AG04450 (cell line): ENCODE measurements at regions of chr10 and their contacts with region 1.

Region 1: GRCh38 chr10:117320050-117320665 is 55.1 kb downstream of the PDZD8 start:
- DNase-seq: no peak
- H3K4me3 ChIP-seq: no peak overlapping the region
- H3K27ac ChIP-seq: no peak overlapping the region
- H3K27me3 ChIP-seq: no peaks in the 10 kb centered on the region
- CTCF ChIP-seq: peak; percentile 67

Region 2: DNA sequence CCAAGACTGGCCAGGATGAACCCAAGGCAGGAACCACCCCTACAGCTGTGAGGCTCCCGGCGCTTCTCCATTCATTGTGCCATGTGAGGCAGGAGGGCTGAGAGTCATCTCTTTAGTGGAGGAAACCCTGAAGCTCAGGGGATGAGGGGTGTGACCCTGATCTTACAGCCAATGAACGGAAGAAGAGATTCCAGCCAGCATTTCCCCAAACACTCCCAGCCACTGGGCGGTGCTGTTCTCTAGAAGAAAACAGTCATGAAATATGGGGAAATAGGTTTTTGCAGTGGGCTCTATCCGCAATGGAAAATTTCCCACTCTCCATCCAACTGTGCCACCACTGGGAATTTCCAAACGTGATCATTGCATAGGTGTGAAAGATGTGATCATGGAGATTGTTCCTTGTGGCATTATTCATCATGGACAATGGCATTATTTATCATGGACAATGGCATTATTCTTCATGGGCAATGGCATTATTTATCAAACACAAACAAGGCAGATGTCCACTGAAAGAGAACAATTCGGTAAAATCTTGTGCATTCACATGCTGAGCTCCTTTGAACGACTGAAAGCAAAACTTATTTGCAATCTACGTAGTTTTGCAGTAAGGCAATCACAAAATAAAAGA is 93.2 kb before region 1 on chr10:
- CTCF ChIA-PET with region 1: interaction called, 19 read pairs
- POLR2A ChIA-PET with region 1: no interaction called
- DNase-seq: no peak
- H3K4me3 ChIP-seq: no peak overlapping the region
- H3K27ac ChIP-seq: no peak overlapping the region
- H3K27me3 ChIP-seq: no peaks in the 10 kb centered on the region
- CTCF ChIP-seq: peak; percentile 49

Region 3: DNA sequence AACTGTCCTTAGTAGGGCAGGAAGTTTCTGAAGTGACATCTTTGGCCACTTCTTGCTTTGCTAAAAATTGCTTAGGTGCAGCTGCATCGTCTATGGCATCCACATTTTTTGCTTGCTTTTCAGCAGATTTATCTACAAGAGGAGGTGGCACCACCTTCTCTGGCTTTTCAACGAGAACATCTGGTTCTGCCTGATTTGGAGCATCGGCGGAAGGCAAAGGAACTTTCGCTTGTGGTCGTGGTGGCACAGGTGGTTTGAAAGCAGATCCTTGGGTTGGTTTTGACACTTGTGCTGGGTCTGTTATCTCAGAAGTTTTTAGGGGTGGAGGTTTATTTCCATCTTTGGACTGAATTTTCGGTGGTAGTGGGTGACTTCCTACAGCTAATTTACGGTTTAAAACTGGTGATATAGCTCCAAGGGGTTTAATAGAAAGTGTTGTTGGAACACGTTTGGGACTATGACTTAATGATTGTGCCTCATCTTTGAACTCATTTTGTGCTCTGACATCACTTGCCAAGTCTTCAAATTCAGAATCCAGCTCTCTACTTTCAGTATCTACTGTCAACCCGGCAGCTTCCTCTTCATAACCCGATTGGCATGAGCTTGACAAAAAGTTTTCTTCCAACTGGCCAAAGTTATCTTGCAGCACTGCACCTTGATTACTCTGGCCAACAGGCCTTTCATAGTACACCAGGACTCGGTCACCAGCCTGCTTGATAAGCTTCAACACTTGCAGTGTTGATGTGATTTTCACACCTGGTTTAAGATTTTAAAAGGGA is 35.3 kb before region 1 on chr10:
- CTCF ChIA-PET with region 1: interaction called, 39 read pairs
- POLR2A ChIA-PET with region 1: no interaction called
- DNase-seq: no peak
- H3K4me3 ChIP-seq: no peak overlapping the region
- H3K27ac ChIP-seq: no peak overlapping the region
- H3K27me3 ChIP-seq: no peaks in the 10 kb centered on the region
- CTCF ChIP-seq: no peak

Region 4: GRCh38 chr10:117334066-117334465 is 13.9 kb after region 1 on chr10:
- CTCF ChIA-PET with region 1: interaction called, 38 read pairs
- POLR2A ChIA-PET with region 1: no interaction called
- DNase-seq: no peak
- H3K4me3 ChIP-seq: no peak overlapping the region
- H3K27ac ChIP-seq: no peak overlapping the region
- H3K27me3 ChIP-seq: no peaks in the 10 kb centered on the region
- CTCF ChIP-seq: no peak

Region 5: DNA sequence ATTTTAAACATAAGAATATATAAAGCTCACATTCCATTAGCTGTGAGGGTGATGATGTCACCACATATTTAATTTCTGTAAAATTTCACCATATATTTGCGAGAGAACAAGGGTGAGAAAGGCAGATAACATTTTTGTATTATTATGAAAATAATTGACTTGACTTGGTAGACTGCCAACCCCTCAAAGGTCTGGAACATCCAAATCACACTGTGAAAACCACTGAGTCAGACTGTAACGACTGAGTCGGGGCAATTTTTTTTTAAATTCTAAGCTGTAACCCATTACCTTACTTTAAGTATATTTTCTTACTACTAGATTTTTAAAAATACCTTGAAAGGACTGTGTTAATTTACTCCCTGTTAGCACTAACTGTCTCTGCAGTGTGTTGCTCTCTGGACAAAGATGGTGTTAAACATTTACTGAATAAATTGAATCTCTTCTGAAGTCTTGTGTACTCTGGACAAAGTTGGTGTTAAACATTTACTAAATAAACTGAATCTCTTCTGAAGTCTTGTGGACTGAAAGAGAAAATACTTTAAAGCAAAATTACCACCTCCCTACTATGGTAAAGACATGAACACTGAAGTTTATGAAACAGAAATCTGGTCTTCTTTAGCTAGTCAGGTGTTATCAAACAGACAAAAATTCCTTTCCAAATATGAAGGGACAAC is 41.0 kb after region 1 on chr10:
- CTCF ChIA-PET with region 1: interaction called, 16 read pairs
- POLR2A ChIA-PET with region 1: interaction called, 3 read pairs
- DNase-seq: no peak
- H3K4me3 ChIP-seq: no peak overlapping the region
- H3K27ac ChIP-seq: no peak overlapping the region
- H3K27me3 ChIP-seq: no peaks in the 10 kb centered on the region
- CTCF ChIP-seq: no peak

Region 6: DNA sequence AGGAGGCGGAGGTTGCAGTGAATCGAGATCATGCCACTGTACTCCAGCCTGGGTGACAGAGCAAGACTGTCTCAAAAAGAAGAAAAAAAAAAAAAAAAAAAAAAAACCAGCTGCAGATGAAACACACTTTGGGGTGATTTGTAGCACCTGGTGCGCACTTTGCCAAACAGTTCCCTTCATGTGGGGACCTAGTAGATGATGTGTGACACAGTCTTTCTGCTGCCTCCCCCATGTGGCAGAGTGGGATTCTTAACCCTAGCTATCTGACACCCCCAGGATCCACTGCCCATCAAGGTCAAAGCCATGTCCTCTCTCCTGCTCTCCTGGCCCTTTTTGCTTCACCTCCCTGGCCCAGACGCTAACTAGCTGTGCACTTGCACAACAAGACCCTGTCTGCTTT is 107.2 kb after region 1 on chr10:
- CTCF ChIA-PET with region 1: no interaction called
- POLR2A ChIA-PET with region 1: no interaction called
- DNase-seq: no peak
- H3K4me3 ChIP-seq: no peak overlapping the region
- H3K27ac ChIP-seq: no peak overlapping the region
- H3K27me3 ChIP-seq: no peaks in the 10 kb centered on the region
- CTCF ChIP-seq: no peak

Region 7: GRCh38 chr10:117537436-117537903 is 217.3 kb after region 1 on chr10:
- CTCF ChIA-PET with region 1: no interaction called
- POLR2A ChIA-PET with region 1: no interaction called
- DNase-seq: no peak
- H3K4me3 ChIP-seq: no peak overlapping the region
- H3K27ac ChIP-seq: no peak overlapping the region
- H3K27me3 ChIP-seq: peaks cover 88% of the 10 kb centered on the region
- CTCF ChIP-seq: peak; percentile 35; the same call in 1 of the 2 replicates